Astrocyte of the cerebellum (primary cell): ENCODE measurements at regions of chr18 and their contacts with region 1.

Region 1: DNA sequence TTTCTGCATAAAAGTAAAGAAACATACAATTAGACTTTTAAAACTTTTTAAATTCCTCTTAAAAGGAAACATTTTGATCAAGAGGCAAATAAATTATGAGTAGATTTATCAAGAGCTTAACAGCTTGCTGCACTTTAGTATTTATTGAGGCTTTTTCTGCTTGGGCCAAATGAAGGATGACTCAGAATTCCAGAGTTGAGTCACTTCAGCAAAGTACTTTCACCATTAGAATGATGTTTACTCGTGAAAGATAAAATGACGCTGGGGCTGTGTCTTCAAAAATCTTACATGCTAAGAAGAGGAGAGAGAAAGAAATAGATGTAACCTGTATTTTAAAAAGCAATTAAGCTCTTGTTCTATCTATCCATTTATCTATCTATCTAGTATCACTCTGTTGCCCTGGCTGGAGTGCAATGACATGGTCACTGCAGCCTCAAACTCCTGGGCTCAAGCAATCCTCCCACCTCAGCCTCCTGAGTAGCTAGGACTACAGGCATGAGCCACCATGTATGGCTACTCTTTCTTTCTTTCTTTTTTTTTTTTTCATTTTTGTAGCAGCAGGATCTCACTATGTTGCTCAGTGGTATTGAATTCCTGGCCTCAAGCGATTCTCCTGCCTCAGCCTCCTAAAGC is 75.3 kb upstream of the RIOK3 start:
- DNase-seq: peak; percentile 79
- H3K4me3 ChIP-seq: no peak overlapping the region
- CTCF ChIP-seq: no peak

Region 2: GRCh38 chr18:23131693-23132319 is 246.0 kb before region 1 on chr18:
- in situ Hi-C with region 1: loop called (anchors 25 kb)
- DNase-seq: peak; percentile 76
- H3K4me3 ChIP-seq: no peak overlapping the region
- CTCF ChIP-seq: peak; percentile 67

Region 3: GRCh38 chr18:23311351-23312121 is 66.2 kb before region 1 on chr18:
- in situ Hi-C with region 1: loop called (anchors 5 kb)
- DNase-seq: peak; percentile 91
- H3K4me3 ChIP-seq: no peak overlapping the region
- CTCF ChIP-seq: no peak